A673 (cell line): ENCODE measurements at regions of chr5 and their contacts with region 1.

Region 1: DNA sequence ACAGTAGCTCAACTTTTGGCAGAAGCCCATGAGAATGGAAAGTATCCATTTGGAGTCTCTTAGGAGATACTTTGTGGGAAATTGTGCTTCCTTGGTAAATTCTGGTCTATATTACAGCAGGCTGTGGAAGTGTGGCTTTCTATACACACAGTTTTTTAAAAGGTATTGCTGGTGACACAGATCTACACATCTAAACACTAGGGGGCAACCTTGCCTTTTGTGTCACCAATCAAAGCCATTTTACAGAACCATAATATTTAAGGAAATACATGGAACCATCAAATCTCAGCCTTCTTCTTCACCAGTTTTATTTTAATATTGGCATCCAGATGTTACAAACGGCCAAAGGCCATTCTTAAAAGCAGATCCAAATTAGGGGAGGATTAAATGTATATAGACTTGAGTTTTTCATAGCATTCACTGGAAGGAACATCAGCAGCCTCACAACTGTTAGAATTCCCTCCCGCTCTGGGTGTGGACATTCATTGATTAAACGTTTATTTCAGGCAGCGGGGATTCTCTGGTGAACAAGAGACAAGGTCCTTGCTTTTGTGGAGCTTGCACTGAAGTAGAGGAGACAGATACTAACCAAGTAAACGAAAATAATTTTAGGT is 132.4 kb upstream of the EPB41L4A start:
- DNase-seq: peak; percentile 68
- H3K4me3 ChIP-seq: no peak overlapping the region
- H3K27ac ChIP-seq: no peak overlapping the region
- H3K4me1 ChIP-seq: no peaks in the 10 kb centered on the region
- H3K27me3 ChIP-seq: no peaks in the 10 kb centered on the region
- CTCF ChIP-seq: peak; percentile 76

Region 2: GRCh38 chr5:111670826-111671492 is 880.6 kb before region 1 on chr5:
- CTCF ChIA-PET with region 1: no interaction called
- POLR2A ChIA-PET with region 1: no interaction called
- intact Hi-C with region 1: no loop called
- DNase-seq: no peak
- H3K4me3 ChIP-seq: no peak overlapping the region
- H3K27ac ChIP-seq: no peak overlapping the region
- H3K4me1 ChIP-seq: no peaks in the 10 kb centered on the region
- H3K27me3 ChIP-seq: no peaks in the 10 kb centered on the region
- CTCF ChIP-seq: peak; percentile 13; the same call in 1 of the 2 replicates

Region 3: DNA sequence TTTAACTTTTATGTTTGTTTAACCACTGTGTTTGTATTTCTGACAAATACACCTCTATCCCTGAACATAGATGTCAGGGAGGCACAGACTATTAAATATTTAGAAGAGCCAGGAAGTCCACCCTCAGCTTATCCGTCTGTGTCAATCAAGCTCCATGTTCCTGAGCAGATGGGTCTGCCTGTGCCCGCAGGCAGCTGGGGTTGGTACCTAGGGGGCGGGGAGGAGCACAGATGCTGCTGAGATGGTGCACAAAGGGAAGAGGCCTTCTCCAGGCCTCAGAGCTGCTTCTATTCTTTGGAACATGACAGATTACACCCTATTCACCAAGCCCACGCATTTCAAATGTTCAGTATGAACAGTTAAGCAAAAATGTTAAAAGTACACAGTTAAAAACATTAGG is 274.5 kb before region 1 on chr5:
- CTCF ChIA-PET with region 1: no interaction called
- POLR2A ChIA-PET with region 1: no interaction called
- intact Hi-C with region 1: no loop called
- DNase-seq: no peak
- H3K4me3 ChIP-seq: no peak overlapping the region
- H3K27ac ChIP-seq: no peak overlapping the region
- H3K4me1 ChIP-seq: no peaks in the 10 kb centered on the region
- H3K27me3 ChIP-seq: no peaks in the 10 kb centered on the region
- CTCF ChIP-seq: no peak

Region 4: GRCh38 chr5:112614986-112615385 is 63.5 kb after region 1 on chr5:
- CTCF ChIA-PET with region 1: no interaction called
- POLR2A ChIA-PET with region 1: no interaction called
- intact Hi-C with region 1: no loop called
- DNase-seq: no peak
- H3K4me3 ChIP-seq: no peak overlapping the region
- H3K27ac ChIP-seq: no peak overlapping the region
- H3K4me1 ChIP-seq: no peaks in the 10 kb centered on the region
- H3K27me3 ChIP-seq: peaks cover 6% of the 10 kb centered on the region
- CTCF ChIP-seq: no peak

Region 5: DNA sequence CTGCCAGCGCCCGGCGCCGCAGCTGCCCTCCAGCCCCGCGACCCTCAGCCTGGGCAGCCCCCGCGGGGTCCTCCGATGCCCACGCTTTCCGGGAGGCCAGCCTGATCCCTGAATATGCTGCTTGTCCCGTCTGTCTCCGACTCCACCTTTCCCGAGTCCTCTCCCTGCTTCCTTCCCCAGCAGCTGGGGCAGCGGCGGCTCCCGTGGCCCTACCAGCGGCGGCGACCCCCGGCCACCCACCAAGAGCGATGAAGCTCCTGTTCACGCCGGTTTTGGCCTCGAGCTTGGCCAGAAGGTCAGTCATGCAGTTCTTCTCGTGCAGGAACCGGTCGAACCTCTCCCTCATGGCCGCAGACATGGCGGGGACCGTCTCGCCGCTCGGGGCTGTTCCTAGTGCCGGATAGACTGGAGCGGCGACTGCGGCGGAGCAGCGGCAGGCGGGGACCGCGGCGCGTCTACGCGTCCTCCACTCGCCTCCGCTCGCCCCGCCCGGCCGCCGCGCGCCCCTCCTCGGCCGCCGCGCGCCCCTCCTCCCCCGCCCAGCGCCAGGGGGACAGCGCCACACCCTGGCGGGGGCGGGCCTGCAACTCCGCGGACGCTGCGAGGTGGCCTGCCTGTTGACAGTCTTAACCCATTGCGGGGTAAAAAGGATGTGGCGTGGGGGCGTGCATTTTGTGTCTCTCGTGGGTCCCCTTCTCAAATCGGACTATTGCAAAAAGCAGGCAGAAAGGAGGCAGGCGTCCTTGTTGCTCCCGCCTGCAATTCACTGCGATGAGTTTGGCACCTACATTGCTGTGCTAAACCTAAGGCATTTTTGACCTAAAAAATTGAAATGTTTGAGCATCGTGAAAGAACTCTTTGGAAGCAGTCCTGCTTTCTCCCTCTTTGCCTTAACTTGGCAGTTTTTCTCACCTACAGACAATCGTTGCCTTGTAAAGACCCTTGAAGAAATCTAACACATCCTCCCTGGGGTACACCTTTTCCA is 370.6 kb after region 1 on chr5 and contains the start of gene REEP5:
- CTCF ChIA-PET with region 1: no interaction called
- POLR2A ChIA-PET with region 1: no interaction called
- intact Hi-C with region 1: loop called (anchors 2 kb)
- DNase-seq: peak; percentile 93
- H3K4me3 ChIP-seq: peak within 1 kb of the TSS; percentile 79
- H3K27ac ChIP-seq: peak within 1 kb of the TSS; percentile 86
- H3K4me1 ChIP-seq: peaks cover 17% of the 10 kb centered on the region
- H3K27me3 ChIP-seq: no peaks in the 10 kb centered on the region
- CTCF ChIP-seq: peak; percentile 73
- total RNA-seq, gene REEP5: 42.8 and 50.5 TPM in 2 replicates

Region 6: DNA sequence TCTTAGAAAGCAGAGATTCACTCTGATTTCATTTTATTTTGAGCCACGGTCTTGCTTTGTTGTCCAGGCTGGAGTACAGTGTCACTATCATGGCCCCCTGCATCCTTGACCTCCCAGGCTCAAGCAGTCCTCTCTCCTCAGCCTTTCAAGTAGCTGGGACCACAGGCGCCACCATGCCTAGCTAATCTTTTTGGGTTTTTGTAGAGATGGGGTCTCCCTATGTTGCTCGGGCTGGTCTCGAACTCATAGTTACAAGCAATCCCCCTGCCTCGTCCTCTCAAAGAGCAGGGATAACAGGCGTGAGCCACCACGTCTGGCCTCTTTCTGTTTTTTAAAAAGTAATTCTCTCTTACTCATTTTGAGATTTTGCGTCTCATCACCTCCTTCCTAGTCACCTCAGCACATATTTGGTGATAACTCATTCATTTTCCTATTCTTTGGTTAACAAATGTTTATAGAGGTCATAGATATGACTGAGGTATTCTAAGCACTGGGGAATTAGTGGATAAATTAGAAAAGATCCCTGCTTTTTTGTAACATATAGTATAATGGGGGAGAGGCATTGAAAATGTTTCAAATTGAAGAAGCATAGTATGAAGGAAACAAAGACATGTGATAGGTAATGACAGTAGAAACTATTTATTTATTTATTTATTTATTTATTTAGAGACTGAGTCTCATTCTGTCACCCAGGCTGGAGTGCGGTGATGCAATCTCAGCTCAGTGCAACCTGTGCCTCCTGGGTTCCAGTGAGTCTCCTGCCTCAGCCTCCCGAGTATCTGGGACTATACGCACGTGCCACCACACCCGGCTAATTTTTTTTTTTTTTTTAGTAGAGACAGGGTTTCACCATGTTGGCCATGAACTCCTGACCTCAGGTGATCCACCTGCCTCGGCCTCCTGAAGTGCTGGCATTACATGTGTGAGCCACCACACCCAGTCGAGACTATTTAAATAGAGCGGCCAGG is 414.5 kb after region 1 on chr5:
- CTCF ChIA-PET with region 1: no interaction called
- POLR2A ChIA-PET with region 1: no interaction called
- intact Hi-C with region 1: loop called (anchors 2 kb)
- DNase-seq: no peak
- H3K4me3 ChIP-seq: no peak overlapping the region
- H3K27ac ChIP-seq: no peak overlapping the region
- H3K4me1 ChIP-seq: no peaks in the 10 kb centered on the region
- H3K27me3 ChIP-seq: no peaks in the 10 kb centered on the region
- CTCF ChIP-seq: no peak